ENCODE measurements at regions of chr2 and their contacts with region 1.

Region 1: DNA sequence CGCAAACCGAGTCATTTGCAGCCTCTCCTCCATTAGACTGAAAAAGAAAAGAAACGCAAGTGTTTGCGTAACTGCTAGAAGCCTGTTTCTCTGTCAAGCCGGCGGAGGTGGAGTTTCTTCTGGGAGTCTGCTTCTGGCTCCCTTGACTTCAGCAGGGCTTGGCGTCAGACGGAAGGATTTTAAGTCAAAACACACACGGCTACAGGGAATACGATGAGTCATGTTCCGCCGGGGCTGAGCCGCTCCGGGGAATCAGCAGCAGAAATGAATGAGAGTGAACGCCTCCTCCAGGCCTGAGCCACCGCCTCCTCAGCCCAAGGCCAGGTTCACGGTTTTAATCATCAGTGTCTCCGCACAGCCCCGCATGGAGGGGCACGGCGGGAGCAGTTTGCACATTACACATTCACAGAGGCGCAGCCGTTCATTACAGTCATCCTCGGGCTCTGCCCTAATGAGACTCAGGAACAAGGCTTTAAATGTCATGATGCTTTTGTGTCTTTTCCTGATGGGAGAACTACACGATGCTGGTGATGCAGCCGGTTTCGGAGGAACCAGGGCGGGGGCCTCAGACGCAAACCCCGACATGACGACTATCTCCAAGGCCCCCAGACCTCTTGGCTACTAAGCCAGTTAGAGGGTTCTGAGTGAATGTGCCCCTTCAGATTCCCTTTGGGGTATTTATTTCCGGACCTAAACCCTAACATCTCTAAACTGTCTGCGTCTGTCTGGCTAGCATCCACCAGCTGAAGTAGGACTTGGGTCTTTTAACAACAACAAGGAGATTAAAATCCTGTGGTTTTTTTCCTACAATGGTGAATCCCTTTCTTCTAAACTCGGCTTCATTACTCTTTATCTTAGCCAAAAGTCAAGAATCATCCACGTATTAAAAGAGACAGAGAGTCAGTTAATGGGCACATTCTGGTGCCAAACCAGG is 11.1 kb upstream of the SCG2 start:
- DNase-seq: peak; percentile 89 to 95
- H3K4me3 ChIP-seq: peak overlapping the region; percentile 35 to 45
- H3K27ac ChIP-seq: peak overlapping the region; percentile 64 to 78
- H3K4me1 ChIP-seq: peaks cover 0 to 12% (median 2%) of the 10 kb centered on the region in 4 donors
- H3K27me3 ChIP-seq: no peaks in the 10 kb centered on the region
- CTCF ChIP-seq: no peak

Region 2: DNA sequence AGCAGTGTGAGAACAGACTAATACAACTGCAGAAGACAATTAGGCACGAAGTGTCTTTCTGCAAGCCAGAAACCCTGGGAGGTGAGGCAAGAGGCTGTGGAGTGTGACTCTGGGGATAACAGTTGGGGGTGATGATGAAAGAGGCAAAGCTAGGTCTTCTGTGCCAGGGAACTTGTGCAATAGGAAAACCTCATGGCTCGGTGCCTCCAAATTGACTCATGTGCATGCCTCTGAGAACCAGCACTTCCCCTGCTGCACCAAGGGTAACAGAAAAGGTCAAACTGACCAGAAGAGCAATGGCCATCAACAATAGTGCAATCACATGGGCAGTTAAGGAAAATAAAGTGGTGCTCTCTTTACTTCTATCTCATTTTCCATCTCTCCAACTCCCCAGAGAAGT is 147.5 kb before region 1 on chr2:
- intact Hi-C with region 1: loop called (anchors 10 kb)
- DNase-seq: peak; percentile 92 to 96
- H3K4me3 ChIP-seq: no peak overlapping the region
- H3K27ac ChIP-seq: peak overlapping the region; percentile 39 to 63
- H3K4me1 ChIP-seq: peaks cover 5 to 52% (median 16%) of the 10 kb centered on the region in 4 donors
- H3K27me3 ChIP-seq: no peaks in the 10 kb centered on the region
- CTCF ChIP-seq: no peak

Region 3: DNA sequence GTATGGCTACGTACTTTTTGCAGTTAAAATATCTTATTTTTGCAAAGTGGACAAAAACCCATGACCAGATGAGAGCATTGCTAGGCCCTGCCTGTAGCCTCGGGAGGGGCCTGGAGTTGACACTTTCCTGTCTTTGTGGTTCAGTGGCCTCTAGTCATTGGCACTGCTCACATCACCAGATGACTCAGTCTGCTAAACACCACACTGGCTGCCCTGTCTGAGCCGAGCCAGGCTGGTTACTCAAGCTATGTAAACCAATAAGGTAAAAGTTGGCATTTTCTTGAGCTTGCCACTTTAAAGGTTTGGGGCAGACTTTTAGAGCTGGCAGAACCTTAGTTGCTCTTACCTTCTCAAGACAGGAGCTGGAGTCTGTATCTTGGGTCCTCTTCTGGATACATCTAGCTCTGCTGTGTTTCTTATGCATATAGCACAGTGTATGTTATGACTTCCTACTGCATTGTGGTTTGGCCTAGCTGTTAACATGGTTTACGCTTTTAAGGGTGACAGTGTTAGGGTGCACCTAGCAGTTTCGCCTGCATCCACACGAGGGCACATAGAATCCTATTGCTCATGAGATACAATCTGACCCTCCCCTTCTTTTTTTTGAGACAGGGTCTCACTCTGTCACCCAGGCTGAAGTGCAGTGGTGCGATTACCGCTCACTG is 147.7 kb after region 1 on chr2:
- intact Hi-C with region 1: no loop called
- DNase-seq: no peak
- H3K4me3 ChIP-seq: no peak overlapping the region
- H3K27ac ChIP-seq: no peak overlapping the region
- H3K4me1 ChIP-seq: peaks cover 0 to 4% (median 0%) of the 10 kb centered on the region in 4 donors
- H3K27me3 ChIP-seq: no peaks in the 10 kb centered on the region
- CTCF ChIP-seq: no peak

Measured in tibial artery (tissue), 4 donors.